Posterior vena cava (tissue), 2 donors: ENCODE measurements at regions of chr15 and their contacts with region 1.

Region 1: GRCh38 chr15:78895471-78895870 is 22.8 kb downstream of the MORF4L1 start:
- DNase-seq: no peak

Region 2: DNA sequence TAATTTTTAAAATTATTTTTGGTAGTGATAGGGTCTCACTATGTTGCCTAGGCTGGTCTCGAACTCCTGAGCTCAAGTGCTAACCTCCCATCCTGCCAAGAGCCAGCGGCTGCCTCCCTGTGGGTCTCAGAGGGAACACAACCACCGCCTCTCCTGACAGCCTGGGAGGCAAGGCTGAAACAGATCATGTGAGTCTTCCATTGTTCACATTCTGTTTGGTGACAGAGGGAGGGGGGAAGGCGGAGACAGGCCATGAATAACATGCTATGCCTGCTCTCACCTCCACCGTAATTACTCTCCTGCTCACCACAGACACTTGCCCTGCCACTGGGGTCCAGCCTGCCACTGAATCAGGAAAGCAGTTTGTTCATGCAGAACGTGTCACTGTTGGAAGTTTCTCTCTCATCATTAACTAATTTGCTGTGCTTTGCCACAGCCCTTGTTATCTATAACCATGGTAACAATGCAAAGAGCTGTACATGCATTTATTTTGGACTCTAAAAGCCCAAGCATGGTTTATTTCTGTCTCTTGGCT is 273.5 kb after region 1 on chr15:
- intact Hi-C with region 1: no loop called
- DNase-seq: no peak

Region 3: DNA sequence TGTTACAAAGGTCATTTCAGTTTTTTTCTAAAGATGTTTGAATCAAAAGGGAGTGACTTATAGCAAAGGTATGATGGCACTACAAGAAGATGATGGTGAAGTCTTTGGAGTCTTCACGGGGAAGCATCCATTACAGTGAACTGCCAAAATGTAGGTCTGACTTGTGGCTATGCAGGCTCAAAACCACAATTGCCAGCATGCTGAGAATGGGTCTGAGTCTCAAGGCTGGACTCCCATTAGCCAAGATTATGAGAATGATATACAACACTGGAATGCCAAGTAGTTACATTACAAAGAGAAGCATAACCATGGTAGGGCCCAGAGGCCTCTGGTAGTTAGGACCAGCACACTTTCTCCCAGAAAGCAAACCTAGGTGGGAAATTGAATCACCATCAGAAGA is 807.1 kb after region 1 on chr15:
- intact Hi-C with region 1: loop called in 1 of 2 experiments (anchors 5 kb)
- DNase-seq: no peak